Uterus (tissue), 4 donors: ENCODE measurements at regions of chr22 and their contacts with region 1.

Region 1: DNA sequence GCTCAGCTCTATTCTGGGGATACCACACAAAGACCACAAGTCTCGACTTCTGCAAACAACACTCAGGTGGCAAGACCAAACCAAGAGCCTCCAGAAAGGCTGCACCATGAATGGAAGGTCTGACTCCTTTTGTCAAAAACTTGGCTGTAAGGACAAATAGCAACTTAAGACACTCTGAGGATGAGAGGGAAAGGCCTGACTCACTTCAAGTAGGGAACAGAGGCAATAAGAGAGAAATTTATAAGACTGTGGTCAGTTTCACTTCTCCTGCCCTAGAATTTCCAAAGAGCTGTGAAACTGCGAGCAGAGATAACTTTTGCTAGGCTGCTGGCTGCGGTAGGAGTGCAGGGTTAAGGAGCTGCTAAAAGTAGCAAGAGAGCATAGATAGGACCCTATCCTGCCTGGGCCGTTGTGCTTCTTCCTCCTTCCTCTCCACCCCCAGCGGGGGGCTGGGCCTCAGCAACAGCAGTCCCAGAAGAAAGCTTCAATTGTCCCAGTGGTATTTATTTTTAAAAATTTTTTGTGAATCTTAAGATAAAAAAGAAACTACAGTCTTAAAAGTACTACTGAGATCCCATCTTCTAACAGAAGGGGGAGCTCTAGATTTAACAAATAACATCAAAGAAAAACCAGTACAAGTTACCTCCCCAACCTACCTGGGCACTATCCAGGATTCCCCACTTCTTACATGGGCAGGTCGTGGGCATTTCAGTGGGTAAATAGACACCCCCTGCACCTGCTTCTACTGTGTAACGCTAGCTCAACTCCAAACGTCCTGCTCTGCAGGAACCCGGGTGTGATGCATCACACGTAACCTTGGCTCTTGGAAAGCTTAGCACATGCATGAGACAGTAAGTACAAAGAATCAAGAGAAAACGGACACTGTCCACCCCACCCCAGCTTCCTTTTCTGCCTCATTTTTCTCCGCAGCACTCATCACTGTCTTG is 66.4 kb downstream of the SGSM3 start:
- DNase-seq: peak; percentile 43 to 46
- H3K4me3 ChIP-seq: peak overlapping the region in 1 of 2 donors; percentile 14
- H3K27ac ChIP-seq: peak overlapping the region; percentile 82 to 89
- H3K4me1 ChIP-seq: peaks cover 0 to 6% of the 10 kb centered on the region in 2 donors
- H3K27me3 ChIP-seq: no peaks in the 10 kb centered on the region
- CTCF ChIP-seq: peak; percentile 71 to 81 (median 78)
- POLR2A ChIP-seq: no peak

Region 2: GRCh38 chr22:39428578-39429071 is 1008.2 kb before region 1 on chr22:
- intact Hi-C with region 1: no loop called
- DNase-seq: no peak
- H3K4me3 ChIP-seq: no peak overlapping the region
- H3K27ac ChIP-seq: no peak overlapping the region
- H3K4me1 ChIP-seq: peaks cover 0 to 15% of the 10 kb centered on the region in 2 donors
- H3K27me3 ChIP-seq: no peaks in the 10 kb centered on the region
- CTCF ChIP-seq: no peak
- POLR2A ChIP-seq: no peak

Region 3: DNA sequence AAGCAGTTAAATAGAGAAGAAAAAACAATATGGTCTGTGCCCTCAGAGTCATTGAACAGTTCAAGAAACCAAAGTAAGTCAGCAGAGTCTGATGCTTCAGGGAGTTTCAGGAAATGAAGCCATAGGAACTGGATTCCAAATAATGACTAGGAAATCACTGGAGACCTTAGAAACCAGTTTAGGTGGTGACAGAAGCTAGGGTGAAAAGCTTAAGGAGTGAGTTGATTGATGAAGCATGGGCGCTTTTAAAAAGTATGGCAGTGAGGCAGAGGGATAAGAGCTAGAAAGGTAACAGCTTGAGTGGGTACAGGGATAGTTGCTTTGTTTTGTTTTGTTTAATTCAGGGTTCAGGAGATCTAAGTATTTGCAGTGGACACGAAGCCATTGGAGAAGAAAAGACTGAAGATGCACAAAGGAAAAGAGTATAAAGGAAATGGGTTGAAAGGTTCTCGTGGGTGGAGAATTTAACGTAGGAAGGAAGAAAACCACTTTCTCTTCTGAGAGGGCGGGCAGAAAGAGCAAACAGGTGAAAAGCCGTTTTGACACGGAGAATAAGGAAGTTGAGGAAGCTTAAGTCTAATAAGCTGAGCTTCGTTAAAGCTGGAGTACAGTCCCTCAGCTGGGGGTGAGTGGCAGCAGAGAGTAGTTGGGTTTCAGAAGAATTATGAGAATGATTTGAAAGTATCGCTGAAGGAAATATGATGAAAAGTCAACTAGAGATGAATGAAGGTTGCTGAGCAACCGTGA is 51.6 kb before region 1 on chr22:
- intact Hi-C with region 1: no loop called
- DNase-seq: no peak
- H3K4me3 ChIP-seq: no peak overlapping the region
- H3K27ac ChIP-seq: no peak overlapping the region
- H3K4me1 ChIP-seq: no peaks in the 10 kb centered on the region
- H3K27me3 ChIP-seq: no peaks in the 10 kb centered on the region
- CTCF ChIP-seq: no peak
- POLR2A ChIP-seq: no peak

Region 4: DNA sequence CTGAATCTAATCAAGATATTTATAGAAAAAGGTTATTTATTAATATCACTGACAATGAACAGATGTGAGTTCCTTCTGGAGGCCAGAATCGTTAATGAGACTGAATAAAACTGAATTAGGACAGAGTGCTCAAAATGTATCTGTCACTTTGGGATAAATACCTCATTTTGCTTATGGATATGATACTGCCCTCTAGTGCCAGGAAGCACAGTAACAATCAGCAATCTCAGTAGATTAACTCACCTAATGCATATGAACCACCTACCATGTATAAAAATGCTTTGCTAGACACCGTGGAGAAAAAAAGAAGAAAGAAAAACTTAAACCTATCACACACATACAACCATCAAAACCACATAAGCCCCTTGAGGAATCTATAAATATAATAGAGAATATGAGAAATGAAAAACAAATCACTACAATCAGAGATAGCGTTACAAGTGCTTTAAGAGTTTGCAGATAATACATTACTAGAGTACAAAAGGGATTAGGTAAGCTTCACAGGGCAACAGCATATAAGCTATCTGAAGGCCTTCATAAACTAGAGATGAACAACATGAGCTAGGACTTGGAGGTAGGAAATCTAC is 51.0 kb after region 1 on chr22:
- intact Hi-C with region 1: loop called (anchors 10 kb)
- DNase-seq: no peak
- H3K4me3 ChIP-seq: no peak overlapping the region
- H3K27ac ChIP-seq: peak overlapping the region; percentile 10 to 35
- H3K4me1 ChIP-seq: peaks cover 9 to 11% of the 10 kb centered on the region in 2 donors
- H3K27me3 ChIP-seq: no peaks in the 10 kb centered on the region
- CTCF ChIP-seq: peak; percentile 39 to 59 (median 52)
- POLR2A ChIP-seq: no peak

Region 5: GRCh38 chr22:40541300-40541699 is 104.5 kb after region 1 on chr22:
- intact Hi-C with region 1: no loop called
- DNase-seq: no peak
- H3K4me3 ChIP-seq: no peak overlapping the region
- H3K27ac ChIP-seq: no peak overlapping the region
- H3K4me1 ChIP-seq: peaks cover 0 to 6% of the 10 kb centered on the region in 2 donors
- H3K27me3 ChIP-seq: no peaks in the 10 kb centered on the region
- CTCF ChIP-seq: no peak
- POLR2A ChIP-seq: no peak

Region 6: DNA sequence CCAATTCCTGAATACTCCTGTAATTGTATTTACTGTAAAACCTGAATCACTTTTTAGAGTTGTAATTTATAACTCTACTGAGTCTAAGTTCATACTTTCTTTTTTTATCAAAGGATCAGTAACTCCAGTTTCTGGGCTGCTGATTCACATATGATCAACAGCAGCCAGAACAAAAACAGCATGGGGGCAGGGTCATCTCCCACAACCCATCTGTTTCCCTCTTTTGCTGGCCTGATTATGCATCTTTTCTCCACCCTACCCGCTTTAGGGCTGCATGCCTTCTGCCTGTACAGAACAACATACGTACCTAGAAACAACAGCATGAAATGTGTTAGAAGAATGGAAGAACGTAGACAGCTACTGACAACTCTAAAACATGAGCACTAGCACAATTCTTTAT is 123.8 kb after region 1 on chr22:
- intact Hi-C with region 1: no loop called
- DNase-seq: no peak
- H3K4me3 ChIP-seq: no peak overlapping the region
- H3K27ac ChIP-seq: peak overlapping the region in 1 of 2 donors; percentile 17
- H3K4me1 ChIP-seq: peaks cover 0 to 4% of the 10 kb centered on the region in 2 donors
- H3K27me3 ChIP-seq: no peaks in the 10 kb centered on the region
- CTCF ChIP-seq: no peak
- POLR2A ChIP-seq: no peak

Region 7: GRCh38 chr22:40641269-40641668 is 204.5 kb after region 1 on chr22:
- intact Hi-C with region 1: loop called (anchors 5 kb)
- DNase-seq: no peak
- H3K4me3 ChIP-seq: no peak overlapping the region
- H3K27ac ChIP-seq: no peak overlapping the region
- H3K4me1 ChIP-seq: no peaks in the 10 kb centered on the region
- H3K27me3 ChIP-seq: no peaks in the 10 kb centered on the region
- CTCF ChIP-seq: no peak
- POLR2A ChIP-seq: no peak